ENCODE measurements at regions of chr1 and their contacts with region 1.

Region 1: GRCh38 chr1:156571949-156572662 is at the start of gene IQGAP3:
- DNase-seq: peak; percentile 94
- H3K4me3 Mint-ChIP-seq: peak within 1 kb of the TSS; percentile 92
- H3K27ac Mint-ChIP-seq: peak within 1 kb of the TSS; percentile 77
- H3K4me1 Mint-ChIP-seq: peaks cover 22% of the 10 kb centered on the region
- H3K27me3 Mint-ChIP-seq: peaks cover 22% of the 10 kb centered on the region
- total RNA-seq, gene IQGAP3: 10.5 and 11.2 TPM in 2 replicates

Region 2: DNA sequence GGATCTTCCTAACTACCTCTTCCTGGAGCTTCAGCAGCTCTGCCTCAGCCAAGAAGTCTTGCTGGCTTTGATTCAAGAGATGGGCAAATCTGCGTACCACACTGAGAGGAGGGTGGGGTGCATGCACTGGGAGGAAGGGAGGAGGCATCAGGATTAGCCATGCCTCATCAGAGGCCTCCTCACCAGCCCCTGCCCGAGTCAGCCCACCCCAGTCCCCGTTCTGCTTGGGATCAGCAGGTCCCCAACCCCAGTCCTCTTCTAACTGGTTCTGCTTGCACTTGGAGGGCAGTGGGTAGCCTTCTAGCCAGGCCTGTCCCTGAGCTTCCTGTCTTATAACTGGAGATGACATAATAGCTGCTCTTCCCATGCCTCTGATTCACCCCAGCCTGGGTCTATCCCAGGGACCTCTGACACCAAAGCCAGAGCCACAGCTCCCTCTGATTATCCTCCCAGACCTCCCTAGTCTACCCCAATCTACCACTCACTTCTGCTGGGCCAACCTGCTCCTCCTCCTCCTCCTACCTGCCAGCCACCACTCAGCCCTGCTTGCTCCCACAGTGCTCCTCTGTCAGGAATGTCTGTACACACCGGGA is 31.2 kb before region 1 on chr1:
- intact Hi-C with region 1: loop called (anchors 5 kb)
- DNase-seq: no peak
- H3K4me3 Mint-ChIP-seq: no peak overlapping the region
- H3K27ac Mint-ChIP-seq: no peak overlapping the region
- H3K4me1 Mint-ChIP-seq: peaks cover 9% of the 10 kb centered on the region
- H3K27me3 Mint-ChIP-seq: no peaks in the 10 kb centered on the region

Region 3: DNA sequence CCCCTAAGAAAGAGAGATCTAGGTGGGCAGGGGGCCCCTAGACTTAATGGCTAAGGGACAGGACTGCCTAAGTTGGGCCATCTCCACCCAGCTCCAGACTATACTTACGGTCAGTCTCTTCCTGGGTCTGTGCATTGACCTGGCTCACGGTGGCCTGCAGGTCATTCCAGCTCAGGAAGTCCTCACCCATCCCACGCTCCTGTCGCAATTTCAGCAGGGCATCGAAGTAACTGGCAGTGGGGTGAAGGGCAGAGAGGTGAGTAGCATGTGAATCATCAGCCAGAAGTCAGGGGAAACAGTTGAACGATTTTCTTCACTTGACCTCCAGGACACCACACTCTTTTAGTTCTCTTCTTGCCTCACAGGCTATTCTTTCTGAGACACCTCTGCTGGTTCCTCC is 20.2 kb before region 1 on chr1:
- intact Hi-C with region 1: no loop called
- DNase-seq: no peak
- H3K4me3 Mint-ChIP-seq: no peak overlapping the region
- H3K27ac Mint-ChIP-seq: no peak overlapping the region
- H3K4me1 Mint-ChIP-seq: no peaks in the 10 kb centered on the region
- H3K27me3 Mint-ChIP-seq: no peaks in the 10 kb centered on the region

Measured in activated CD4-positive, alpha-beta T cell treated with anti-CD3 and anti-CD28 coated beads, Interleukin-2, amount 10 ng/mL, durations not matched to agents 24 days and 14 days (primary cell).